ENCODE measurements at regions of chr5 and their contacts with region 1.

Region 1: GRCh38 chr5:16934123-16934522 is 2.0 kb downstream of the MYO10 start:
- DNase-seq: peak; percentile 44 to 74 (median 73)
- ATAC-seq: peak; percentile 53 to 70
- H3K4me3 ChIP-seq: peak overlapping the region; percentile 51
- H3K27ac ChIP-seq: no peak overlapping the region
- H3K4me1 ChIP-seq: peaks cover 4% of the 10 kb centered on the region
- H3K27me3 ChIP-seq: no peaks in the 10 kb centered on the region

Region 2: DNA sequence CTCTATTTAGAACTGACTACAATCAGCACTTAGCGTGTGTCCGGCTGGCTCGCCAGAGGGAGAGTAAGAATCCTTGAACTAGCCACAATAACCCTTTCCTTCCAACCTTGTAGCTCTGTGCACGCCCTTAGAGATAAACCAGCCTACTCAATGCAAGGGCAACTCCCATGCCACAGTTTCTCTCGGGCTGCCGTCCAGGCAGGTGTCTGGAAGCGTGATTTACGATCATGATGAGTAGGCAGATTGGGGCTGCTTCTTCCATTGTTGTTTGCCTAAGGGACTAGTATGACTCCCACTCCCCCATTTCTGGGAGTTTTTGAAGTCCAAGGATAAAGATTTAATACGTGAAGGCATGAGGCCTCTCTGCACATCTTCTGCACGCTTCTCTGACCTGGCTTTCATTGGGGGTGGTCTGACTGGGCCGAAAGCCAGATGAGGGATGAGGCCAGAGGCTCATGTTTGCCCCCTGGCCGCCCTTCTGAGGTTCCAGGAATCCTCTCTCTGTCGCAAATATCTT is 135.9 kb after region 1 on chr5:
- intact Hi-C with region 1: loop called in 2 of 4 experiments (anchors 10 kb)
- DNase-seq: peak in 2 of 3 donors; percentile 14 to 51
- ATAC-seq: peak; percentile 56 to 93
- H3K4me3 ChIP-seq: no peak overlapping the region
- H3K27ac ChIP-seq: peak overlapping the region; percentile 3
- H3K4me1 ChIP-seq: no peaks in the 10 kb centered on the region
- H3K27me3 ChIP-seq: no peaks in the 10 kb centered on the region

Region 3: DNA sequence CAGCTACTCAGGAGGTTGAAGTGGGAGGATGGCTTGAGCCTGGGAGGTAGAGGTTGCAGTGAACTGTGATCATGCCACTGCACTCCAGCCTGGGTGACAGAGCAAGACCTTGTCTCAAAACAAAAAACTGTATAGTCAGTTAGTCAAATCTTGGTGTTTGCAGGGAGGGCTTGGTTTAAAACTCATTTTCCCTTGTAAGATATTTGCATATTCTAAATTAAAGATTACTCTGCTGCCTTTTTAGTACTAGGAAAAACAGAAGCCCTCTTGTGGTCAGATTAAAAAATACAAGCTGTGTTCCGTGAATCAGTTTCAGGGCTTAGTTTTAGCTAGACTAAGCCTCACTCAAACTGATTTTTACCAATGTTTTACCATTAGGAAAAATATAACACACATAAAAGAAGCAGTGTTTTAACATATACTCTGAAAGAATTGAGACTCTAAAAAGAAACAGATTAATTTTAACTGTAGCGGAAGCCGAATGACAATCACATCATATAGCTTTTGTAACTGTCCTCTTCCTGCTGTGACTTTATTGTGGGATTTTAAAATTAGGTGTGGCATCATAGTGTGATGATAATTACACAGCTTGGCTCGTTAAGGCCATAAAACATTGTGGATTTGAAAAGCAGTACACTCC is 198.4 kb after region 1 on chr5:
- intact Hi-C with region 1: loop called in 1 of 4 experiments (anchors 10 kb)
- DNase-seq: no peak
- ATAC-seq: no peak
- H3K4me3 ChIP-seq: no peak overlapping the region
- H3K27ac ChIP-seq: no peak overlapping the region
- H3K4me1 ChIP-seq: no peaks in the 10 kb centered on the region
- H3K27me3 ChIP-seq: no peaks in the 10 kb centered on the region

Region 4: GRCh38 chr5:17189381-17190036 is 255.4 kb after region 1 on chr5:
- intact Hi-C with region 1: loop called in 2 of 4 experiments (anchors 10 kb)
- DNase-seq: peak; percentile 82 to 93 (median 83)
- ATAC-seq: peak; percentile 67 to 84
- H3K4me3 ChIP-seq: no peak overlapping the region
- H3K27ac ChIP-seq: no peak overlapping the region
- H3K4me1 ChIP-seq: peaks cover 3% of the 10 kb centered on the region
- H3K27me3 ChIP-seq: no peaks in the 10 kb centered on the region